ENCODE measurements at regions of chr14 and their contacts with region 1.

Region 1: GRCh38 chr14:68843471-68844209 is 50.8 kb upstream of the ZFP36L1 start:
- DNase-seq: peak; percentile 56 to 86 (median 73)
- ATAC-seq: peak; percentile 85
- H3K4me3 ChIP-seq: no peak overlapping the region
- H3K4me3 Mint-ChIP-seq: peak overlapping the region; percentile 28
- H3K27ac ChIP-seq: no peak overlapping the region
- H3K27ac Mint-ChIP-seq: no peak overlapping the region
- H3K4me1 ChIP-seq: peaks cover 17% of the 10 kb centered on the region
- H3K4me1 Mint-ChIP-seq: peaks cover 23% of the 10 kb centered on the region
- H3K27me3 ChIP-seq: no peaks in the 10 kb centered on the region
- H3K27me3 Mint-ChIP-seq: no peaks in the 10 kb centered on the region
- CTCF ChIP-seq: peak; percentile 94

Region 2: DNA sequence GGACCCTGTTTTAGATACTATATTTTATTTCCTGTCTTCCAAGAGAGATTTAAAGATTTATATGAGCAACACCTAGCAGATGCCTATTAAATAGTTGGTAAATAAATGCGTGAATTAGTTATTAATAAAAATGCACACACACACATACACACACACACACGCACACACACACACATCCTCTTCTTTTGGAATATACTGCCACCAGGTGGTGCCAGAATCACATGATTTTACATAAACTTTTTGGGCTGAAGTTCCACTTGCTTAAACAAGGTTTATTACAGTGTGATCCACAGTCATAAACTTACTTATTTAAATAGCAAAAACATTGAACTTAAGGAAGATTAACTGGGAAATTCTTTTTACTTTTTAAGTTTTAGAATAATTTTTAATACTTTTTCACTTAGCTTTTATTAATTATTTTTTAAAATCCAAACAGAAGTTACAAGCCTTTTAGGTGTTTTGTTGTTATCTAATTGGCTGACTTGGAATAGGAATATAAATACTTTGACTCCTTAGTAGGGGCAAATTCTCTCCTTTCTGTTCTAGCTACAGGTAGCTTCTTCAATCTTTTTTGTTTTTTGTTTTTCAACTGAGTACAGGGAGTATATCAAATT is 1006.5 kb before region 1 on chr14:
- CTCF ChIA-PET with region 1: interaction called, 4 read pairs
- POLR2A ChIA-PET with region 1: no interaction called
- intact Hi-C with region 1: loop called in 1 of 2 experiments (anchors 2 kb)
- DNase-seq: peak in 13 of 14 experiments; percentile 18 to 85 (median 40)
- ATAC-seq: peak; percentile 63
- H3K4me3 ChIP-seq: no peak overlapping the region
- H3K4me3 Mint-ChIP-seq: no peak overlapping the region
- H3K27ac ChIP-seq: no peak overlapping the region
- H3K27ac Mint-ChIP-seq: no peak overlapping the region
- H3K4me1 ChIP-seq: no peaks in the 10 kb centered on the region
- H3K4me1 Mint-ChIP-seq: peaks cover 7% of the 10 kb centered on the region
- H3K27me3 ChIP-seq: no peaks in the 10 kb centered on the region
- H3K27me3 Mint-ChIP-seq: no peaks in the 10 kb centered on the region
- CTCF ChIP-seq: peak; percentile 66

Region 3: GRCh38 chr14:67883717-67884116 is 959.9 kb before region 1 on chr14:
- CTCF ChIA-PET with region 1: interaction called, 4 read pairs
- POLR2A ChIA-PET with region 1: no interaction called
- intact Hi-C with region 1: loop called (anchors 2 to 5 kb)
- DNase-seq: peak in 2 of 14 experiments; percentile 4 to 26
- ATAC-seq: no peak
- H3K4me3 ChIP-seq: no peak overlapping the region
- H3K4me3 Mint-ChIP-seq: no peak overlapping the region
- H3K27ac ChIP-seq: no peak overlapping the region
- H3K27ac Mint-ChIP-seq: no peak overlapping the region
- H3K4me1 ChIP-seq: no peaks in the 10 kb centered on the region
- H3K4me1 Mint-ChIP-seq: peaks cover 27% of the 10 kb centered on the region
- H3K27me3 ChIP-seq: no peaks in the 10 kb centered on the region
- H3K27me3 Mint-ChIP-seq: no peaks in the 10 kb centered on the region
- CTCF ChIP-seq: no peak

Region 4: DNA sequence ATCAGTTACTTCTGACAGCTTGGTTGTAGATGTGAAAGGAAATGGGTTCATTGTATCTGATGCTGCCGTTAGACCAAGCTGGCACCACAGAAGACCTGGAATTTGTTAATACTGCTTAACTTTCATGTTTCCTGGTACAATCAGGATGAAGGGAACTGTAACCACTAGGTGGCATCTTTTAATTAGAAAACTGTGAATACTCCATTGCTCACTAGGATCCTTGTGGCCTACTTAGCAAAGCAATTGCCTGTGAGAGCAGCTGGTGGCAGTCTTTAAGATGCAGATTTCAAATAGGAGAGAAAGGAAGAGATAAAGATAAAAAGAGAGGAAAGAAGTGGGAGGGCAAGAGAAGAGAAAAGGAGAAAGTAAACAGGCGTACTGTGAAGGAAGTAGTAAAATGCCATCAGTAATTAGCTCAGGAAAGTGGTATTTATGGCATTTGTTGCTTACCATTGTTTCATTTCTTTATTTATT is 909.6 kb before region 1 on chr14:
- CTCF ChIA-PET with region 1: interaction called, 7 read pairs
- POLR2A ChIA-PET with region 1: no interaction called
- intact Hi-C with region 1: loop called (anchors 2 kb)
- DNase-seq: peak in 4 of 14 experiments; percentile 29 to 69 (median 66)
- ATAC-seq: peak; percentile 67
- H3K4me3 ChIP-seq: no peak overlapping the region
- H3K4me3 Mint-ChIP-seq: no peak overlapping the region
- H3K27ac ChIP-seq: no peak overlapping the region
- H3K27ac Mint-ChIP-seq: peak overlapping the region; percentile 17
- H3K4me1 ChIP-seq: no peaks in the 10 kb centered on the region
- H3K4me1 Mint-ChIP-seq: peaks cover 6% of the 10 kb centered on the region
- H3K27me3 ChIP-seq: no peaks in the 10 kb centered on the region
- H3K27me3 Mint-ChIP-seq: no peaks in the 10 kb centered on the region
- CTCF ChIP-seq: peak; percentile 76

Region 5: DNA sequence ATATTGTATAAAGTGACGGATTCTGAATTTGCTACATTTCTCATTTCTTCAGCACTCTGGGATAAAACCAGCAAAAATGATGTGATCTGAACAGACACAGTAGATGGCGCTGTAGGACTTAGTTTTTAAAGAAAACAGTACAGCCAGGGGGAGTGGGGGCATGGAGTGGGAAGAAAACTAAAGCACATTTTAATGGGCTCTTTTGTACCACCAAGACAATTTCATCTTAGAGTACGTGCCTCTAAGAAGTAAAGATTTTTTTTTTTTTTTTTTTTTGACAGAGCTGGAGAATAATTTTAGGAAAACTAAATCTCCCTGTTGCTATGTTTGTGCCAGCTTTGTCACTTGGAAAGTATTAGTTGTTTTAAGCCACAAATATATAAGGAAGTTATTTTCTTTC is 899.7 kb before region 1 on chr14:
- CTCF ChIA-PET with region 1: interaction called, 10 read pairs
- POLR2A ChIA-PET with region 1: no interaction called
- intact Hi-C with region 1: loop called (anchors 1 kb)
- DNase-seq: peak in 11 of 14 experiments; percentile 7 to 78 (median 40)
- ATAC-seq: peak; percentile 66
- H3K4me3 ChIP-seq: no peak overlapping the region
- H3K4me3 Mint-ChIP-seq: no peak overlapping the region
- H3K27ac ChIP-seq: no peak overlapping the region
- H3K27ac Mint-ChIP-seq: no peak overlapping the region
- H3K4me1 ChIP-seq: no peaks in the 10 kb centered on the region
- H3K4me1 Mint-ChIP-seq: no peaks in the 10 kb centered on the region
- H3K27me3 ChIP-seq: no peaks in the 10 kb centered on the region
- H3K27me3 Mint-ChIP-seq: no peaks in the 10 kb centered on the region
- CTCF ChIP-seq: peak; percentile 70

Region 6: GRCh38 chr14:68874746-68875155 is 31.1 kb after region 1 on chr14:
- CTCF ChIA-PET with region 1: no interaction called
- POLR2A ChIA-PET with region 1: no interaction called
- intact Hi-C with region 1: no loop called
- DNase-seq: peak in 4 of 14 experiments; percentile 20 to 36 (median 24)
- ATAC-seq: peak; percentile 26
- H3K4me3 ChIP-seq: peak overlapping the region; percentile 24
- H3K4me3 Mint-ChIP-seq: no peak overlapping the region
- H3K27ac ChIP-seq: no peak overlapping the region
- H3K27ac Mint-ChIP-seq: no peak overlapping the region
- H3K4me1 ChIP-seq: no peaks in the 10 kb centered on the region
- H3K4me1 Mint-ChIP-seq: no peaks in the 10 kb centered on the region
- H3K27me3 ChIP-seq: no peaks in the 10 kb centered on the region
- H3K27me3 Mint-ChIP-seq: no peaks in the 10 kb centered on the region
- CTCF ChIP-seq: no peak